Activated CD4-positive, alpha-beta T cell treated with anti-CD3 and anti-CD28 coated beads, Interleukin-2, amount 10 ng/mL, durations not matched to agents 7 days and 5 days (primary cell): ENCODE measurements at regions of chr16 and their contacts with region 1.

Region 1: GRCh38 chr16:30692381-30693064 is 6.4 kb upstream of the SRCAP start:
- DNase-seq: no peak
- H3K4me3 Mint-ChIP-seq: no peak overlapping the region
- H3K27ac Mint-ChIP-seq: no peak overlapping the region
- H3K4me1 Mint-ChIP-seq: peaks cover 32% of the 10 kb centered on the region
- H3K27me3 Mint-ChIP-seq: no peaks in the 10 kb centered on the region

Region 2: DNA sequence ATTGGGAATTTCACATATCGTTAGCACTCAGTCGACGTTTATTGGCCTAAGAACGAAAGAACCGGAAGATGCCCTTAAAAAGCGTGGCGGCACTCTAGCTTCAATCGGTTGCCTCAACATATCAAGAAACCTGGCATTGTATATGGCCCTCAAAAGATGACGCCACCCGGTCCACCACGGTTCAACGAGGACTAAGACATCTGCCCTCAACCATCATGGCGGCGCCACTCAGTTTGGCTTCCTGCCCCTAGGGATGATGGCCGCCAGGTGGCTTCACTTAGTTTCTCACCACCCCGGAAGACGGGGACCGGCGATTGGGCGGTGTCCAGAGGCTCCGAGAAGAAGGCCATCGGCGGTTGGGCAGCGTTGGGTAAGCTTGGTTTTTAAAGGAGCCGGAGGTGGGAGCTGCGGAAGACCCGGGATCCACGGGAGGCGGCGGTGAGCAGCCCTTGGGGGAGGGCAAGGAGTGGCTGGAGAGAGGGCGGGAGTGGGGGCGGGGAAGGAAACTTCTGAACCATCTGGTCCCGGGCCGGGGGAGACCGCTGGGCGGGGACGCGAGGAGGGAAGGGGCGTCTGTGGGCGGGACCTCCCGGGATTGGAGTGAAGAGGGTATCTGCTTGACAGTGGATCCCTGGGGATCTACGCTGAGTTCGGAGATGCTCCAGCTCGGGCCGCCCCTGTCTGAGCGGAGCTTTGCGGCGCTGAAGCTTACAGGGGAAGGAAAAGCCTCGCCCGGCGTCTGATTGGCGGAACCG is 42.0 kb before region 1 on chr16 and contains the start of gene PRR14:
- CTCF ChIA-PET with region 1: interaction called, 18 read pairs
- POLR2A ChIA-PET with region 1: no interaction called
- DNase-seq: peak; percentile 100
- H3K4me3 Mint-ChIP-seq: peak within 1 kb of the TSS; percentile 100
- H3K27ac Mint-ChIP-seq: peak within 1 kb of the TSS; percentile 99
- H3K4me1 Mint-ChIP-seq: peaks cover 41% of the 10 kb centered on the region
- H3K27me3 Mint-ChIP-seq: peaks cover 2% of the 10 kb centered on the region
- total RNA-seq, gene PRR14: 78.6 to 80.1 TPM

Region 3: DNA sequence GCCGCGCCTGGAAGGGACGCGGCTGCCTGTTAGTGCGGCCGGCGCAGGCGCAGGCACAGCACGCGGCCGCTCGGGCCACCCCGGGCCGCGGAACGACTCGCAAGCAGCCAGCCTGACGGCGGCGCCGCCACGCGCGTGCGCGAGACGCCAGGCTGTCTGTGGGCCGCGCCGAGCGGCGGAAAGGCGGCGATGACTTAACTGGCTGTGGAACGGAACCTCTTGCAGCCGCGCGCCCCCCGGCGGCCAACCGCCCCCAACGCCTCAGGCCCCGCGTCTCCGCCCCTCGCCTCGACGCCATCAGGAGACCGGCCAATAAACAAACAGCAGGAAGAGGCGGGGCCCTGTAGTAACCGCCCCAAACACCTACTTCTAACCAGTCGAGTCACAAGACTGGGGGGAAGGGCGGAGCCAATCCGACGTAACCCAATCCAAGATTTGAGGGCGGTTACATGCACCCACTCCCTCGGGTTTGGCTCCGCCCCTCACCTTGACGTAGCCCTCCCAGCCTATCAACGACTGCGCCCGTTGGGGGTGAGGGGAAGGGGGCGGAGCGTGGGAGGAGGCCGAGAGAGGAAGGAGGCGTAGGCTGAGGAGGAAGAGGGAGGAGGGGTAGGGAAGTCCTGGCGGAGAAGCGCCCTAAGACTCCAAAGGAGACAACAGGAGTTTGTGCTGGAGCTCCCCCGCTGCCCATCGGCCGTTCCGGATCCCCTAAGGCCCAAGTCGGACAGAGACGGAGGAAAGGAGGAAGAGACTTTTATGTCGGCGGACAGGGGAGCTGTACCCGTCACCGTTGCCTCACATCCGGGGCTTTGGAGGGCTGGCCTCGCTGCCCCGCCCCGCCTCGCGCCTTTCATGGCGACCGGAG is 34.4 kb before region 1 on chr16 and contains the start of gene FBRS:
- CTCF ChIA-PET with region 1: interaction called, 32 read pairs
- POLR2A ChIA-PET with region 1: interaction called, 4 read pairs
- DNase-seq: peak; percentile 100
- H3K4me3 Mint-ChIP-seq: peak within 1 kb of the TSS; percentile 93
- H3K27ac Mint-ChIP-seq: peak within 1 kb of the TSS; percentile 100
- H3K4me1 Mint-ChIP-seq: peaks cover 49% of the 10 kb centered on the region
- H3K27me3 Mint-ChIP-seq: no peaks in the 10 kb centered on the region
- total RNA-seq, gene FBRS: 88.9 to 109 TPM

Region 4: DNA sequence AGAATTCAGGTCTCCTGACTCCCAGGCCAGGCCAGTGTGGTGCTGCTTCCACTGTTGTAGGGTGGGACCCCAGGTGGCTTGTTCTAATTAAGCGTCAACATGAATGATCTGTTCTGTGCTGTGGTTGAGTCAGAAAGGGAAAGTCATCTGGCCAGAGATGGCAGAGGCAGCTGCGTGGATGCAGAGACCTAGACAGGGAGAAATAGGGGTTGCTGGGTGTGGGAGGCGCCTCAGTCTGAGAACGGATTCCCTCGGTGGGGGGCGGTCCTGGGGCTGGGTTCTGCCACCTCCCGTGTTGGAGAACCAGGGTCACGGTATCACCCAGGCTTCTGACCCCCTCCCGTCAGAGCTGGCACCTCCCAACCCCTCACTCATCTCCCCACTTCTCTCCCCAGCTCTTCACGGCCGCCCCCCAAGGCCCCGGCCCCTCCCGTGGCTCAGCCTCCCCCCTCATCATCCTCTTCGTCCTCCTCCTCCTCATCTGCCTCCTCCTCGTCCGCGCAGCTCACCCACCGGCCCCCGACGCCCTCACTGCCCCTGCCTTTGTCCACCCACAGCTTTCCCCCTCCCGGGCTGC is 28.6 kb before region 1 on chr16:
- CTCF ChIA-PET with region 1: interaction called, 32 read pairs
- POLR2A ChIA-PET with region 1: no interaction called
- DNase-seq: no peak
- H3K4me3 Mint-ChIP-seq: no peak overlapping the region
- H3K27ac Mint-ChIP-seq: no peak overlapping the region
- H3K4me1 Mint-ChIP-seq: peaks cover 37% of the 10 kb centered on the region
- H3K27me3 Mint-ChIP-seq: no peaks in the 10 kb centered on the region

Region 5: DNA sequence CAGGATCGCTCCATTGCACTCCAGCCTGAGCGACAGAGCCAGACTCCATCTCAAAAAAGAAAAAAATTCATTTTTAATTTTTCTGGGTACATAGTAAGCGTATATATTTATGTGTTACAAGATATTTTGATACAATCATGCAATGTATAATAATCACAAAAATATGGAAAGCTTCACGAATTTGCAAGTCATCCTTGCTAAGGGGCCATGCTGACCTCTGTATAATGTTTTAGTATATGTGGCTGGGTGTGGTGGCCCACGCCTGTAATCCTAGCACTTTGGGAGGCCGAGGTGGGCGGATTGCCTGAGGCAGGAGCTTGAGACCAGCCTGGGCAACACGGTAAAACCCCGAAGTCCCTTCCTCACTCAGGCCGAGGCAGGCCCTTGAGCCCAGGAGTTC is 17.4 kb before region 1 on chr16:
- CTCF ChIA-PET with region 1: interaction called, 22 read pairs
- POLR2A ChIA-PET with region 1: interaction called, 5 read pairs
- DNase-seq: no peak
- H3K4me3 Mint-ChIP-seq: no peak overlapping the region
- H3K27ac Mint-ChIP-seq: no peak overlapping the region
- H3K4me1 Mint-ChIP-seq: no peaks in the 10 kb centered on the region
- H3K27me3 Mint-ChIP-seq: no peaks in the 10 kb centered on the region

Region 6: DNA sequence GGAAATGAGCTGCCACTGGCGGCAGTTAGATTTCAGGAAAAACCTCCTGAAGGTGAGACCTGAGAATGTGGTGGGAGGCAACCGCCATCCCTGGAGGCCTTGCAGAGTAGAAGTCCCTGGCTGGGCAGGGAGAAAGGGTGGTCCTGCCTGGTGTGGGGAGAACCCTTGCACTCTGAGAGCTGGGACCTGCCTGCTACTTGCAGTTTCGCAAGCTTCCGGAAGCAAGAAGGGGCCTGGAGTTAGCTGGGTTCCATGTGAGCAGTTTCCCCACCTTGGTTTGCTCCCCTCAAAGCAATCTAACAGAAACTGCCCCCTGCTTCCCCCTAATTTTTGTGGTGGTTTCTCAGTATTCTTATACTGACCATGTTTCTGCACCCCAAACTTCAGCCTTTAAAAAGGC is 88.0 kb after region 1 on chr16:
- CTCF ChIA-PET with region 1: no interaction called
- POLR2A ChIA-PET with region 1: no interaction called
- DNase-seq: no peak
- H3K4me3 Mint-ChIP-seq: no peak overlapping the region
- H3K27ac Mint-ChIP-seq: no peak overlapping the region
- H3K4me1 Mint-ChIP-seq: peaks cover 13% of the 10 kb centered on the region
- H3K27me3 Mint-ChIP-seq: peaks cover 8% of the 10 kb centered on the region

Region 7: GRCh38 chr16:30893744-30894539 is 201.4 kb after region 1 on chr16 and contains the start of gene BCL7C:
- CTCF ChIA-PET with region 1: no interaction called
- POLR2A ChIA-PET with region 1: no interaction called
- DNase-seq: peak; percentile 83
- H3K4me3 Mint-ChIP-seq: peak within 1 kb of the TSS; percentile 81
- H3K27ac Mint-ChIP-seq: peak within 1 kb of the TSS; percentile 90
- H3K4me1 Mint-ChIP-seq: peaks cover 52% of the 10 kb centered on the region
- H3K27me3 Mint-ChIP-seq: no peaks in the 10 kb centered on the region
- total RNA-seq, gene BCL7C: 21.8 to 22.1 TPM